ENCODE measurements at regions of chr3 and their contacts with region 1.

Region 1: DNA sequence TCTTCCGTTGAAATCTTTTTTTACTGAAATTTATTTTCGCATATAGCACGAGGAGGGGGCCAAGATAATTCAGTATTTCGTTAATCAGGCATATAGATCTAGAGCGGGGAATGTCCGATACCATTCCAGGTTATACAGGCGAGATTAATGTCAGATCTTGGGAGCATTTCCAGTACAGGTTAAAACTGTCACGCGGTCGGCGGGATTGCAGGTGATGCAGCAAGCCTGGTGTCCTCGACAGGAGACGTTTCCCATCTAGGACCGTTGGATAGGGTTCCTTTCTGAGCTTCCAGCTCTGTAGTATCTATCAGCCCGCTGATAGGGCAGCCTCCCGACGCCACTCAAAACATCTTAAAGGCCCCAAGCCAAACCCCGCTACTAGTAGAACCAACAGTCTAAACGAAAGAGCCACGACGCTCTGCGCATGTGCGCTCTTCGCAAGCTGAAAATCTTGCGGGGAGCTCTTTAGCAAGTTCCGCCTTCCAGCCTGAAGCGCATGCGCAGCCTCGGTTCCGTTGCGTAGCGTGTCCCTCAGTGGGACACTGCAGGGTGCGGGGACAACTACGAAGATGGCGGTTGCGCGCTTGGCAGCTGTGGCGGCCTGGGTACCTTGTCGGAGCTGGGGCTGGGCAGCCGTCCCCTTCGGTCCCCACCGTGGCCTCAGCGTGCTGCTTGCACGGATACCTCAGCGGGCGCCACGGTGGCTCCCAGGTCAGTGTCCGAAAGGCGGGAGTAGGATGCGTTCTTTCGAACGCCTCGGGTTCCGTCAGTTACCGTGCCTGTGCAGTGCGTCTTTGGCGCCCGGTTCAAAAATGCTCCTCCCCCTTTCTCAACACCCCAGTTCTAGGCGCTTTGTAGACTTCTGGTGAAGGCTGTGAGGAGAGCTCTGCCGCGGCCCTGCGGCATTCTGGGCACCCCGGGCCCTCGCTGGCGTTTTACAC is at the start of gene ABHD10:
- DNase-seq: peak; percentile 94 to 97 (median 96)
- H3K4me3 ChIP-seq: peak within 1 kb of the TSS; percentile 63 to 99 (median 91)
- H3K27ac ChIP-seq: peak within 1 kb of the TSS; percentile 46 to 97 (median 86)
- H3K27me3 ChIP-seq: no peaks in the 10 kb centered on the region
- CTCF ChIP-seq: peak in 36 of 56 donors; percentile 3 to 53 (median 32)
- total RNA-seq, gene ABHD10: 22.8 to 62.2 (median 48.1) TPM

Region 2: GRCh38 chr3:111315925-111316587 is 662.7 kb before region 1 on chr3:
- intact Hi-C with region 1: no loop called
- DNase-seq: no peak
- H3K4me3 ChIP-seq: no peak overlapping the region
- H3K27ac ChIP-seq: no peak overlapping the region
- H3K27me3 ChIP-seq: no peaks in the 10 kb centered on the region
- CTCF ChIP-seq: no peak

Region 3: GRCh38 chr3:112013058-112013783 is 34.5 kb after region 1 on chr3:
- intact Hi-C with region 1: loop called in 1 of 2 experiments (anchors 5 kb)
- DNase-seq: peak in 9 of 10 donors; percentile 36 to 77 (median 68)
- H3K4me3 ChIP-seq: peak overlapping the region in 19 of 59 donors; percentile 1 to 37 (median 21)
- H3K27ac ChIP-seq: peak overlapping the region in 50 of 59 donors; percentile 1 to 79 (median 59)
- H3K27me3 ChIP-seq: no peaks in the 10 kb centered on the region
- CTCF ChIP-seq: peak; percentile 41 to 86 (median 72)

Region 4: GRCh38 chr3:113531826-113532697 is 1553.3 kb after region 1 on chr3 and contains the start of gene SIDT1:
- intact Hi-C with region 1: no loop called
- DNase-seq: peak in 4 of 10 donors; percentile 40 to 62 (median 50)
- H3K4me3 ChIP-seq: peak within 1 kb of the TSS; percentile 47 to 90 (median 72)
- H3K27ac ChIP-seq: peak within 1 kb of the TSS in 58 of 59 donors; percentile 0 to 89 (median 77)
- H3K27me3 ChIP-seq: peaks cover 0 to 37% (median 0%) of the 10 kb centered on the region in 45 donors
- CTCF ChIP-seq: peak in 8 of 56 donors; percentile 6 to 18 (median 8)
- total RNA-seq, gene SIDT1: 20.1 to 84.0 (median 47.1) TPM

Measured in dorsolateral prefrontal cortex (tissue), 120 donors.